ENCODE measurements at regions of chr15 and their contacts with region 1.

Region 1: GRCh38 chr15:52552303-52552702 is 16.5 kb downstream of the ARPP19 start:
- DNase-seq: no peak
- H3K4me3 ChIP-seq: no peak overlapping the region
- H3K27ac ChIP-seq: no peak overlapping the region
- H3K4me1 ChIP-seq: no peaks in the 10 kb centered on the region
- H3K27me3 ChIP-seq: no peaks in the 10 kb centered on the region
- CTCF ChIP-seq: no peak

Region 2: DNA sequence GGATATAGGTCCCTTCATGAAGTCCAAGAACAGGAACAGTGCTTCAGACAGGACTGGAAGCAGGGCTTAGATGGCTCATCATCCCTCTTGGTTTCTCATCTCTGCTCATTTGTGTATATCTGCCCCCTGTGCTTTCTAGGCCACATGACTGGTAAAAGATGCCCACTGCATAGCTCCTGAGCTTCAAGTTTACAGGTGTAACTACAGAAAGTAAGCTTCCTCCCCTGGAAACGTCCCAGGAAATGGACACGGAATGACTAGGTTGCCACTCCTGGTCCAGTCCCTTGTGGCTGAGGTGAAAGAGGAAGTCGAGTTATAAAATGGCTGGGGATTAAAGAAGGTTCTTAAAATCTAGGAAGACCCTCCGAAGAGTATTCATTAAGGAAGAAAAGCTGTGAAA is 56.1 kb before region 1 on chr15:
- CTCF ChIA-PET with region 1: no interaction called
- POLR2A ChIA-PET with region 1: interaction called, 12 read pairs
- intact Hi-C with region 1: no loop called
- DNase-seq: no peak
- H3K4me3 ChIP-seq: no peak overlapping the region
- H3K27ac ChIP-seq: no peak overlapping the region
- H3K4me1 ChIP-seq: peaks cover 6% of the 10 kb centered on the region
- H3K27me3 ChIP-seq: no peaks in the 10 kb centered on the region
- CTCF ChIP-seq: no peak

Region 3: GRCh38 chr15:52790162-52790708 is 237.9 kb after region 1 on chr15 and contains the start of gene ONECUT1:
- CTCF ChIA-PET with region 1: no interaction called
- POLR2A ChIA-PET with region 1: interaction called, 17 read pairs
- intact Hi-C with region 1: no loop called
- DNase-seq: peak; percentile 46
- H3K4me3 ChIP-seq: peak within 1 kb of the TSS; percentile 45
- H3K27ac ChIP-seq: no peak within 1 kb of the TSS
- H3K4me1 ChIP-seq: peaks cover 4% of the 10 kb centered on the region
- H3K27me3 ChIP-seq: peaks cover 98% of the 10 kb centered on the region
- CTCF ChIP-seq: no peak
- total RNA-seq, gene ONECUT1: not detected in 2 replicates